Ascending aorta (tissue), 2 donors: ENCODE measurements at regions of chr6 and their contacts with region 1.

Region 1: DNA sequence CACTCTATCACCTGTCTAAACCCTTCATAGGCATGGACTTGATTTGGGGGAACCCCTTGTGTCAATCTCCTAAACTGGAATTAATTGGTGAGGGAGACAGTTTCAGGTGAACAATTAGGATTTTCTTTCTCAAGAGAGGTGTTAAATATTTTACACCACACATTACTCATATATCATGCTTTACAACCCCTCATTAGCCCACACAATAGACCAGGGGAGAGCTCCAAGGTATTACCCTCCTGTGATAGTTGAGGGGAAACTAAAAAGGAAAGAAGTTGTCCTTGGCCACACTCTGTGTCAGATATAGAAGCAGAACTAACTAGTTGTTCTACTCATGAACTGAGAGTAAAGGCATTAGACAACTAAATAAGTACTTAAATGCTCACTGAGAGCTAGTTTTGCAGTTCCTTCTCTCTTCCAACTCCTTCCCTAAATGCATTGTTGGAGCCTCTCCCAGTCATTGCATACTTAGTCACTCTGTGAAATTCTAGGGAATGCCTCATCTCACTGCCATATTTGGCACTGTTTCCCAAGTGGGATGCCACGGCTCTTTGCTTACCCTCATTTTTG is 183.7 kb upstream of the CEP162 start:
- DNase-seq: peak in 1 of 2 donors; percentile 65
- H3K4me3 ChIP-seq: no peak overlapping the region
- H3K27ac ChIP-seq: peak overlapping the region; percentile 55 to 59
- H3K4me1 ChIP-seq: peaks cover 0 to 13% of the 10 kb centered on the region in 2 donors
- H3K27me3 ChIP-seq: no peaks in the 10 kb centered on the region
- CTCF ChIP-seq: no peak

Region 2: DNA sequence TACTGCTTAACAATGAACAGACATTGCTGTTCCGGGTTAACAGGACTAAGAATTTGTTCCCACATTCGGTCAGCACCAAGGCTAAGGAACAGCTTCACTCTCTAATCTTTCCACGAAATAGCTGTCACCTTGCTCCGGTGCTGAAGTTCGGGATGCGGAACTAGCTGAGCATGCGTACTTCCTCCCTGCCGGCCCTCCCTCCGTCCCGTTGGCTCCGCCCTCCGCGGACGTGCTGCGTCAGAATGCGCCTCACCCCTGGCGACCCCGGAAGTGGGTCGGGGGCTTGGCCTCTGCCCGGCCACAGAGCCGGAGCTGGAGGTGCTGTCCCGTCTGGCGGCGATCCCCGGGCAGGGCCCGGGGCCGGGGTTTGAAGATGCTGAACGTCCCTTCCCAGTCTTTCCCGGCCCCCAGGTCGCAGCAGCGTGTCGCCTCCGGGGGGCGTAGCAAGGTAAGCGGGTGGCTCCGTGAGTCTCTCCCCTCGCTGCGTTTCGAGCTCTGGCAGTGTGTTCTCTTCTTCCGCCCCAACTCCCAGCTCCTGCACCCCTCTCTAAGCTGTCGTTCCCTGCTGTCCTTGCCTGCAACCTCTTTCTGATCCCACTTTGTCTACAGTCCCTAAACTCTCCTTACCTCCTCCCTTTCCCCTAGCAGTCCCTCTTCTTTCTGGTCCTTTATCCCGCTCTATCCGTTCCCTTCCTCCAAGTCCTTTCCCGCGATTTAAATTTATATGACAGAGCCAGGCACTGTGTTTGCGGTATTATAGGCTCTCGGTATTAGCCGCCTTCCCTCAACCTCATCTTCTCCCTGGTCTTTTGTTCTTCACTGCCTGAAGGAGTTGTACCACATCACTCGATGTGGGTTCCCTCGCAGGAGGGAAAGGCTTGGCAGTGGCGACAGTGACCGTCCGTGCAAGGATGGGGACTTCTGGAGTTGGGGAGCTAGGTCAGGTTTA is 551.5 kb before region 1 on chr6 and contains the start of gene CYB5R4:
- intact Hi-C with region 1: loop called (anchors 10 kb)
- DNase-seq: peak; percentile 71 to 97
- H3K4me3 ChIP-seq: peak within 1 kb of the TSS; percentile 77 to 83
- H3K27ac ChIP-seq: peak within 1 kb of the TSS; percentile 84 to 85
- H3K4me1 ChIP-seq: peaks cover 4 to 15% of the 10 kb centered on the region in 2 donors
- H3K27me3 ChIP-seq: no peaks in the 10 kb centered on the region
- CTCF ChIP-seq: peak; percentile 40 to 63 (median 49)
- total RNA-seq, gene CYB5R4: 0.53 TPM

Region 3: GRCh38 chr6:84344005-84344404 is 67.1 kb before region 1 on chr6:
- intact Hi-C with region 1: no loop called
- DNase-seq: no peak
- H3K4me3 ChIP-seq: no peak overlapping the region
- H3K27ac ChIP-seq: no peak overlapping the region
- H3K4me1 ChIP-seq: no peaks in the 10 kb centered on the region
- H3K27me3 ChIP-seq: no peaks in the 10 kb centered on the region
- CTCF ChIP-seq: no peak